Activated CD4-positive, alpha-beta T cell treated with anti-CD3 and anti-CD28 coated beads, Interleukin-2, amount 10 ng/mL, durations not matched to agents 7 days and 5 days (primary cell): ENCODE measurements at regions of chr12 and their contacts with region 1.

Region 1: DNA sequence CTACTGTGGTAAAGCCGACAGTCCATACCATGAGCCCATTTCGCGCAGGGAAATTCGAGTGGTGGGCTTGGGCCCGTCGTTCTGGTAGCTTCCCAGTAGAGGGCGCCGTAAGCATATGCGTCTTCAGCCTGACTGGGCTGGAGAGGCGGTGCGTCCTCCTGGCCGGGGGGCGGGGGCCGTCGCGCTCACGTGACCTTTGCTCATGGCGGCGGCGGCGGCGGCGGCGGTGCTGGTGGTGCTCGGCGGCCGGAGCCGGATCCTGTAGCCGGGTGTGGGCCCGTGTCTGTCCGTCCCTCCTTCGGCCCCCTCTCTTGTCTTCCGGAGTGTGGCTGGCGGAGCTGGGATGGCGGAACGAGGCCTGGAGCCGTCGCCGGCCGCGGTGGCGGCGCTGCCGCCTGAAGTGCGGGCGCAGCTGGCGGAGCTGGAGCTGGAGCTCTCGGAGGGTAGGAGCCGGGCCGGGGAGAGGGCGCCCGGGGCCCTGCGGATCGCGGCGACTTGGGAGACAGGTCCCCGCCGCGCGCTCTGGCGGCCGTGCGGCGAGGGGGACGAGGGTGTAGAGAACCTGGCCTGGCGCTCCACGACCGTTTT is at the start of gene DIP2B:
- DNase-seq: peak; percentile 97
- H3K4me3 Mint-ChIP-seq: peak within 1 kb of the TSS; percentile 93
- H3K27ac Mint-ChIP-seq: peak within 1 kb of the TSS; percentile 94
- H3K4me1 Mint-ChIP-seq: peaks cover 45% of the 10 kb centered on the region
- H3K27me3 Mint-ChIP-seq: no peaks in the 10 kb centered on the region
- total RNA-seq, gene DIP2B: 28.9 to 30.4 TPM

Region 2: GRCh38 chr12:50517456-50518048 is 12.7 kb after region 1 on chr12:
- CTCF ChIA-PET with region 1: interaction called, 77 read pairs
- POLR2A ChIA-PET with region 1: no interaction called
- DNase-seq: no peak
- H3K4me3 Mint-ChIP-seq: no peak overlapping the region
- H3K27ac Mint-ChIP-seq: no peak overlapping the region
- H3K4me1 Mint-ChIP-seq: peaks cover 62% of the 10 kb centered on the region
- H3K27me3 Mint-ChIP-seq: no peaks in the 10 kb centered on the region

Region 3: GRCh38 chr12:50637870-50638481 is 133.1 kb after region 1 on chr12:
- CTCF ChIA-PET with region 1: interaction called, 41 read pairs
- POLR2A ChIA-PET with region 1: interaction called, 4 read pairs
- DNase-seq: no peak
- H3K4me3 Mint-ChIP-seq: no peak overlapping the region
- H3K27ac Mint-ChIP-seq: peak overlapping the region; percentile 21
- H3K4me1 Mint-ChIP-seq: peaks cover 47% of the 10 kb centered on the region
- H3K27me3 Mint-ChIP-seq: no peaks in the 10 kb centered on the region